ENCODE measurements at regions of chr2 and their contacts with region 1.

Region 1: GRCh38 chr2:11129598-11130449 is 25.4 kb upstream of the SLC66A3 start:
- DNase-seq: peak; percentile 82 to 87
- ATAC-seq: peak; percentile 76

Region 2: GRCh38 chr2:11169333-11169732 is 39.5 kb after region 1 on chr2:
- intact Hi-C with region 1: no loop called
- DNase-seq: no peak
- ATAC-seq: peak; percentile 53

Region 3: GRCh38 chr2:11187083-11187619 is 57.3 kb after region 1 on chr2:
- intact Hi-C with region 1: no loop called
- DNase-seq: no peak
- ATAC-seq: no peak

Region 4: DNA sequence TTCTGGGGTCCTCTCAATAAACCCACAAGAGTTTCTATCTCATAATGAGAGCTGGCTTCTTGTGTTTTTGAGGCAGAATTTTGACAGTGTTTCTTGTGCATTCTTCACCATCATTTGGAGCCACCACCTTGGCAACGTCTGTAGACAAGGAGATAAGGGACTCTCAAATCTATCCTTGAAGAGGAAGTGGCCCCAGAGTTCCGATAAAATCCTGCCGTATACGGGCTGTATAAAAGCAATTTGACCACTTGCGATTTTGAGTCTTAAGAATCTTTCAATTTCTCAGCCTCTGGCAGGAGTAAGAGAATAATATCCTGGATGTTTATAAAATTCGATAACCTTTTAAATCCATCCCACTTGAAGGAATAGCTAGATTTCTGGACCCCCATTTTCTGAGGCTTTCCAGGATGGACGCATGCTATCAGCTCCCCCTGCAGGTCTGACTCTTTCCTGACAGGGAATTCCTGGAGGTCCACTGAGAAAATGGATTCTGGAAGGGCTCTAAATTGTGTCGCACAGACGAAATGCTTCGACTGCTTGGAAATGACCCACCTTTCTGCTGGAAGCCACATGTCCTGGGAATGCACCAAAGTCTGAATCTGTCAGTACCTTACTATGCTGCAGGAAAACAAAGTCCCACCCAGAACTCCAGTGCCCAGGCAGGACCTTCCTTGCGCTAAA is 282.1 kb after region 1 on chr2:
- intact Hi-C with region 1: loop called in 1 of 2 experiments (anchors 10 kb)
- DNase-seq: peak in 1 of 2 donors; percentile 67
- ATAC-seq: peak; percentile 70

Measured in left colon (tissue), 2 donors.